ENCODE measurements at regions of chr2 and their contacts with region 1.

Region 1: DNA sequence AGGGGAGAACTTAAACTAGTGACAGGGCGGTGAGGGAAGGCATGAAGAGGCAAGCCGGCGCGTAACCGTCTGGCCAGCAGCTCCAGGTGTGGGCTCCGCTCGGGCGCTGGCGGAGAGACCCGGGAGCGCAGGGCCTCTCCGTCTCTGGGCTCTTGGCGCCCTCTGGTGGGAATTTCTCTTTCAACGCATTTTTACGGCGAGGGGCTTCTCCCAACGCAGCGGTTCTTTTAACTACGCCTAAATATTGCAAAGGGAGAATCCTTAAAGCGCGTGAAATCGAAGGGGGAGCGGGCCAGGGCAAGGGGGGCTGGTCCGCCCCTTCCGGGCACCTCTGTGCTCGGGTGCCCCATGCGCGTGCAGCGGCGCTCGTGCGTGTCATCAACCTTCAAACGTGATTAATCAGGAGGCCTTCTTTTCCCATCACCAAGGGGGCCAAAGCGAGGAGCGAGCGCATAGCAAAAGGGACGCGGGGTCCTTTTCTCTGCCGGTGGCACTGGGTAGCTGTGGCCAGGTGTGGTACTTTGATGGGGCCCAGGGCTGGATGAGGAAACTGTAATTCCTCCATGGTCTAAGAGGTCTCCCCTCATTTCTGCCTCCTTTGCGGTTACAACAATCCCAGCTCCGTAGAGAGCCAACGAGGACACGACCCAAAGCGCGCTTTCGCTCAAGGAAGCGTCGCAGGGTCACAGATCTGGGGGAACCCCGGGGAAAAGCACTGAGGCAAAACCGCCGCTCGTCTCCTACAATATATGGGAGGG is 762 bp upstream of the GAD1 start:
- DNase-seq: peak; percentile 86
- ATAC-seq: peak; percentile 50
- H3K4me3 Mint-ChIP-seq: peak overlapping the region; percentile 70
- H3K27ac Mint-ChIP-seq: peak overlapping the region; percentile 31
- H3K4me1 Mint-ChIP-seq: peaks cover 44% of the 10 kb centered on the region
- H3K27me3 Mint-ChIP-seq: peaks cover 63% of the 10 kb centered on the region

Region 2: GRCh38 chr2:170324640-170325046 is 491.3 kb before region 1 on chr2:
- CTCF ChIA-PET with region 1: interaction called, 42 read pairs
- POLR2A ChIA-PET with region 1: no interaction called
- intact Hi-C with region 1: loop called (anchors 1 kb)
- DNase-seq: peak; percentile 63
- ATAC-seq: peak; percentile 36
- H3K4me3 Mint-ChIP-seq: no peak overlapping the region
- H3K27ac Mint-ChIP-seq: no peak overlapping the region
- H3K4me1 Mint-ChIP-seq: no peaks in the 10 kb centered on the region
- H3K27me3 Mint-ChIP-seq: peaks cover 4% of the 10 kb centered on the region

Region 3: GRCh38 chr2:170369894-170370293 is 446.0 kb before region 1 on chr2:
- CTCF ChIA-PET with region 1: interaction called, 43 read pairs
- POLR2A ChIA-PET with region 1: interaction called, 3 read pairs
- intact Hi-C with region 1: loop called (anchors 1 to 2 kb)
- DNase-seq: no peak
- ATAC-seq: no peak
- H3K4me3 Mint-ChIP-seq: no peak overlapping the region
- H3K27ac Mint-ChIP-seq: no peak overlapping the region
- H3K4me1 Mint-ChIP-seq: peaks cover 42% of the 10 kb centered on the region
- H3K27me3 Mint-ChIP-seq: peaks cover 28% of the 10 kb centered on the region

Region 4: DNA sequence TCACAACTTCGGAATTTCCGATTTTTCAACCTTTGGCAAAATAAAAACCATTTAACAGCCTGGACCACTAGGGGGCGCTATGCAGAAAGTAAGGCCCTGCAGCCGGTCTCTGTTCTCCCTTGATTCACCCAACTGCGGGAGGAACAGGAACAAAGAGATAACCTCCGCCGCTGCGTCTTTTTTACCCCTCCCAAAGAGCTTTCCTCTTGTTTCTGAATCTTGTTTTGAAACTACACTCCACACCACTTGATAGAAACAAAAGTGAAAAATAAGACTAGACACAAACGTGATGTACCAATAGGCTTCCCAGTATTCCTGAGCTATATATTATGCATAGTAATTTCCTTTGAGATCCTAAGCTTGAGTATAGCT is 406.8 kb before region 1 on chr2:
- CTCF ChIA-PET with region 1: interaction called, 8 read pairs
- POLR2A ChIA-PET with region 1: no interaction called
- intact Hi-C with region 1: loop called (anchors 1 kb)
- DNase-seq: peak; percentile 88
- ATAC-seq: peak; percentile 65
- H3K4me3 Mint-ChIP-seq: peak overlapping the region; percentile 11
- H3K27ac Mint-ChIP-seq: no peak overlapping the region
- H3K4me1 Mint-ChIP-seq: peaks cover 5% of the 10 kb centered on the region
- H3K27me3 Mint-ChIP-seq: peaks cover 16% of the 10 kb centered on the region

Region 5: GRCh38 chr2:170695521-170696410 is 120.2 kb before region 1 on chr2:
- CTCF ChIA-PET with region 1: no interaction called
- POLR2A ChIA-PET with region 1: no interaction called
- intact Hi-C with region 1: no loop called
- DNase-seq: no peak
- ATAC-seq: no peak
- H3K4me3 Mint-ChIP-seq: no peak overlapping the region
- H3K27ac Mint-ChIP-seq: no peak overlapping the region
- H3K4me1 Mint-ChIP-seq: no peaks in the 10 kb centered on the region
- H3K27me3 Mint-ChIP-seq: peaks cover 9% of the 10 kb centered on the region

Region 6: GRCh38 chr2:170770606-170771420 is 45.1 kb before region 1 on chr2:
- CTCF ChIA-PET with region 1: interaction called, 14 read pairs
- POLR2A ChIA-PET with region 1: interaction called, 8 read pairs
- intact Hi-C with region 1: loop called (anchors 1 to 2 kb)
- DNase-seq: peak; percentile 83
- ATAC-seq: peak; percentile 88
- H3K4me3 Mint-ChIP-seq: peak overlapping the region; percentile 79
- H3K27ac Mint-ChIP-seq: peak overlapping the region; percentile 73
- H3K4me1 Mint-ChIP-seq: peaks cover 13% of the 10 kb centered on the region
- H3K27me3 Mint-ChIP-seq: peaks cover 8% of the 10 kb centered on the region

Region 7: DNA sequence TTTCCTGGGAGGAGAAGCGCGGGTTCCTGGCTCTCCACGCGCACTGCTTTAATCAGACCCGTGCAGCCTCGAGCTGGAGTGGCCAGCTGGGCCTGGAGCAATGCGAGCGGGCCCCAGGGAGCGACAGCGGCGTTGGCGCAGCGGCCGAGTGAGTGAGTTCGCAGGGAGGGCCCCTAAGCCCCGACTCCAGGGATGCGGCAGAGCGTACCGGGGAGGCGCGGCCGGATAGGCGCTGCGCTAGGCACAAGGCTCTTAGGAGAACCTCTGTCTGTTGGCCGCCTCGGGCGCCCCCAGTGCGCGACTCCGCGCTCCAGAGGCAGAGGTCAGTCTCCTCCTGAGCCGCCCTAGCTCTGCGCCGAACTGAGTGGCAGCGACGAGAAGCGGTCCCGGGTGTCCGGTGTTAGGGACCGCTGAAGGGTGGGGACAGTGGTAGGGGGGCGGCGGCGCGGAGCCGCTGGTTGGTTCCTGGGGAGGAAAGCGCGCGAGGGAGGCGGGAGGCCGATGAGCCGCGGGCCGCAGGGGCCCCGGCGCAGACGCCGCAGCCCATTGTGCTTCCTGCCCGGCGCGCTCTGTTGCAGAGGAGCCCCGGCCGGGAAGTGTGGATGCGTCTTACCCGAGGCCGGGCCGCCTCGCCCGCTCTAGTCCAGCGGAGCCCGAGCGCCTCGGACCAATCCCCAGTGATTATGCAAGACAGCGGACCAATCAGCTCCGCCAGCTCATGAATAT is 1269.0 kb after region 1 on chr2:
- CTCF ChIA-PET with region 1: no interaction called
- POLR2A ChIA-PET with region 1: no interaction called
- intact Hi-C with region 1: loop called (anchors 5 kb)
- DNase-seq: peak; percentile 78
- ATAC-seq: peak; percentile 78
- H3K4me3 Mint-ChIP-seq: peak overlapping the region; percentile 73
- H3K27ac Mint-ChIP-seq: no peak overlapping the region
- H3K4me1 Mint-ChIP-seq: peaks cover 55% of the 10 kb centered on the region
- H3K27me3 Mint-ChIP-seq: peaks cover 82% of the 10 kb centered on the region

Measured in activated CD4-positive, alpha-beta T cell treated with anti-CD3 and anti-CD28 coated beads for 36 hours (primary cell).